ENCODE measurements at regions of chr11 and their contacts with region 1.

Region 1: GRCh38 chr11:95150946-95151684 is 61.5 kb downstream of the ENDOD1 start:
- DNase-seq: peak; percentile 82 to 98 (median 90)

Region 2: DNA sequence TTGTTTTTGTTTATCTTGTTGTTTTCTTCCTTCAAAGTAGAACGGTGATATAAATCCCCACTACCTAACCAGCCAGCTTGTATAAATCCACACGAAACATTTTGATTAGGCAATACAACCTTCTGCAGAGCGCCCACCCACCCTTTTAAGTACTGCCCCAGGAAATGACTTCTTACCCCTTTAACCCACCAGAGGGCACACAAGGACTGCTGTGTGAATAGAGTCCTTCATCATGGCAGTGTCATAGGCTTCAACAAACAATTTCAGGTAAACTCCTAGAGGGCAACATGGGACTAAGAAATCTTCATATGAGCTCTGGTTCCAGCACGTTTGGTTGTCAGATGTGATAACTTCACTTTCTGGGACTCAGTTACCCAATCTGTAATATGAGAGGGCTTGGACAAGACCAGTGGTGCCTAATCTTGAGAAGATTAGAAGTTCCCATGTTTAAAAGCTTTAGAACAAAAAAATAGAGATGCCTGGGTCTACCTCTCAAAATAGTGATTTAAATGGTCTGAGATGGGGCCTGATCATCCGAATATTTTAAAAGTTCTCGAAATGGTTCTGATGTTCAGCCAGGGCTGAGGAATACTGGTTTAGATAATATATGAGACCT is 527.9 kb before region 1 on chr11:
- intact Hi-C with region 1: loop called (anchors 5 kb)
- DNase-seq: peak in 3 of 10 donors; percentile 17 to 36 (median 20)

Region 3: DNA sequence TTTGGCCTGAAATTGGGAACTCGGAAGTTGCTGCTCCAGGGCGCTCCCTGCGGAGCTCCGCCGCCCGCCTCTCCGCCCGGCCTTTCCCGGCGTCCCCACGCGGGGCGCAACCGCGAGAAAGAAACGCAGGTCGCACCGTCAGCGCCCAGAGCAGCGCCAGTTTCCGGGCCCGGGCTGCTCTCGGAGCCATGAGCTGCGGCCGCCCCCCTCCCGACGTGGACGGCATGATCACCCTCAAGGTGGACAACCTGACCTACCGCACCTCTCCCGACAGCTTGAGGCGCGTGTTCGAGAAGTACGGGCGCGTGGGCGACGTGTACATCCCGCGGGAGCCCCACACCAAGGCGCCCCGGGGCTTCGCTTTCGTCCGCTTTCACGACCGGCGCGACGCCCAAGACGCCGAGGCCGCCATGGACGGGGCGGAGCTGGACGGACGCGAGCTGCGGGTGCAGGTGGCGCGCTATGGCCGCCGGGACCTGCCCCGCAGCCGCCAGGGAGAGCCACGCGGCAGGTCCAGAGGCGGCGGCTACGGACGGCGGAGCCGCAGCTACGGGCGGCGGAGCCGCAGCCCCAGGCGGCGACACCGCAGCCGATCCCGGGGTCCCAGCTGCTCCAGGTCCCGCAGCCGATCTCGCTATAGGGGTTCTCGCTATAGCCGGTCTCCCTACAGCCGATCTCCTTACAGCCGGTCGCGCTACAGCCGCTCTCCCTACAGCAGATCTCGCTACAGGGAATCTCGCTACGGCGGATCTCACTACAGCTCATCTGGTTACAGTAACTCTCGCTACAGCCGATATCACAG is 83.9 kb before region 1 on chr11:
- intact Hi-C with region 1: loop called (anchors 2 kb)
- DNase-seq: peak; percentile 73 to 97 (median 84)

Region 4: DNA sequence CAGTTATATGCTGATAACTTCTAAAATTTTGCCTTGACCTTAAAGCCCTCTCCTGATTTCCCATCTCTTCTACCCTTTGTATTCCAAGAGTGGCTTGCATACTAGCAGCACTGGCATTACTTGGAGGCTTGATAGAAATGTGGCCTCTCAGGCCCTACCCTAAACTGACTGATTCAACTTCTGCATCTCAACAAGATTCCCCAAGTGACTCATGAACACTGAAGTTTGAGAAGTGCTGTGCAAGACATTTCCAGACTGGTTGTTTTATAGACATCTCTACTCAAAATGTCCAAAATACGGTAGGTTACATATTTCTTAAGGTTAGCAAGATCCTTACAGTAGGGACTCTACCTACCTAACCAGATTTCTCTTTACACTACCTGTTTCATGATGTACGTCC is 31.3 kb after region 1 on chr11:
- intact Hi-C with region 1: no loop called
- DNase-seq: no peak

Region 5: GRCh38 chr11:95193541-95193940 is 42.4 kb after region 1 on chr11:
- intact Hi-C with region 1: no loop called
- DNase-seq: no peak

Region 6: GRCh38 chr11:95231127-95231880 is 80.2 kb after region 1 on chr11 and contains the start of gene SESN3:
- intact Hi-C with region 1: loop called (anchors 5 kb)
- DNase-seq: peak; percentile 94 to 100 (median 99)

Region 7: DNA sequence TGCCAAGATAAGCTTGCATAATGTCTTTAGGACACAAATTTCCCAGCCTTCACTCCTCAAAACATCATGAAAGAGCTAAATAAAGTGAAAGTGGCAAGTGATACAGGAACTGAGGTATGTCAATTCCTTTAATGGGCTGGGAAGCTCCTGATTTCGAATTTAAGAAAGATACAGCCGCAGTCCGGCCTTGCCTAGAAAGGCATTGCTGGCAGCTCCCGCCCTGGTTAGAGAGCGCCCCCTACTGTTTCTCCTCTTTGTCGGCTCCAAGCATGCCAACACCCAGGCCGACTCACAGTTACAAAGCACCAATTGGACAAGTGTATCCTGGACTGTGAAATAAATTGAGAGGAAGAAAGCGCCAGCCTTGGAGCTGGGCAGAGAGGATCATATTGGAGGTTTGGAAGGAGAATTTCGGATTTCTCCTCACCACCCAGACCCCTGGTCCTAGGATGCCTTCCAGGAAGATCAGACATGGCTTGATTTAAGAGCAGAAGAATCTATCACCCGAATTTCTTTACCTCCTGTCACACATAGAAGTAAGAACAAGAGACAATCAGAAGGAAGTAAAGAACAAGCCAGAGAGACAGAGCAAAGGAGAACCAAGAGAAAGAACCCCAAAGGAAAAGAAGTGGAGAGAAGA is 554.5 kb after region 1 on chr11:
- intact Hi-C with region 1: loop called (anchors 1 kb)
- DNase-seq: peak; percentile 69 to 97 (median 88)

Measured in posterior cingulate gyrus (tissue), 11 donors.